Naive thymus-derived CD4-positive, alpha-beta T cell (primary cell): ENCODE measurements at regions of chr17 and their contacts with region 1.

Region 1: DNA sequence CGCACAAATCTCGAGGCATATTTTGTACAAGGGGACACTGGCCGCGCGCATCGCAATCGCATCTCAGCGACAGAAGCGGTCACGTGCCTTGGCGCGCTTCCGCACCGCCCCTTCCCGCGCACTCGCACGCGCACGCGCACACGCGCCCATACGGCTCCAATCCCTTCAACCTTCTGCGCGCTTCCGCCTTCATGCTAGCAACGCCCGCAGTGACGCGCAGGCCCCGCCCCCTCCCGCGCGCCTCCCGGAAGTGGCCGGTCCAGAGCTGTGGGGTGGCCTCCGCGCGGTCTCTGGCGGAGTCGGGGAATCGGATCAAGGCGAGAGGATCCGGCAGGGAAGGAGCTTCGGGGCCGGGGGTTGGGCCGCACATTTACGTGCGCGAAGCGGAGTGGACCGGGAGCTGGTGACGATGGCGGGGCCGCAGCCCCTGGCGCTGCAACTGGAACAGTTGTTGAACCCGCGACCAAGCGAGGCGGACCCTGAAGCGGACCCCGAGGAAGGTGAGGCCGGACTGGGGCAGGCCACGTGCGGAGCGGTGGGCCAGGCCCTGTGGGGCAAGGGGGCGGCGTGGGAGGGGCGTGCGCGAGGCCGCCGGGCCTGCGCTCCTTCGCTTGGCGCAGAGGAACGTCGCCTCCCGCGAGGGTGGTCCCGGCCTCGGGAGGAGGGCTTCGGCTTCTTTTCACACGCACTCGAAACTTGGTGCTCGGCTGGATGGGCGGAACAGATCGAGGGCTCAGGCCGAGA is at the start of gene AATF:
- DNase-seq: peak; percentile 93 to 99 (median 97)
- ATAC-seq: peak; percentile 99
- H3K4me3 ChIP-seq: peak within 1 kb of the TSS; percentile 69
- H3K4me3 Mint-ChIP-seq: peak within 1 kb of the TSS; percentile 91 to 99 (median 95)
- H3K27ac ChIP-seq: peak within 1 kb of the TSS; percentile 85
- H3K27ac Mint-ChIP-seq: peak within 1 kb of the TSS; percentile 91 to 97 (median 94)
- H3K4me1 ChIP-seq: peaks cover 21 to 33% of the 10 kb centered on the region in 2 donors
- H3K4me1 Mint-ChIP-seq: peaks cover 43 to 60% (median 51%) of the 10 kb centered on the region in 7 donors
- H3K27me3 ChIP-seq: peaks cover 7 to 18% of the 10 kb centered on the region in 2 donors
- H3K27me3 Mint-ChIP-seq: peaks cover 26 to 45% (median 34%) of the 10 kb centered on the region in 5 donors
- total RNA-seq, gene AATF: 39.7 to 70.8 (median 58.7) TPM

Region 2: GRCh38 chr17:36486204-36487194 is 462.4 kb before region 1 on chr17 and contains the start of gene ZNHIT3:
- CTCF ChIA-PET with region 1: no interaction called
- POLR2A ChIA-PET with region 1: interaction called, 3 read pairs
- intact Hi-C with region 1: loop called in 1 of 2 experiments (anchors 5 kb)
- DNase-seq: peak; percentile 74 to 94 (median 91)
- ATAC-seq: peak; percentile 98
- H3K4me3 ChIP-seq: peak within 1 kb of the TSS; percentile 82
- H3K4me3 Mint-ChIP-seq: peak within 1 kb of the TSS; percentile 87 to 100 (median 100)
- H3K27ac ChIP-seq: peak within 1 kb of the TSS; percentile 86
- H3K27ac Mint-ChIP-seq: peak within 1 kb of the TSS; percentile 94 to 100 (median 99)
- H3K4me1 ChIP-seq: peaks cover 29 to 41% of the 10 kb centered on the region in 2 donors
- H3K4me1 Mint-ChIP-seq: peaks cover 39 to 70% (median 49%) of the 10 kb centered on the region in 7 donors
- H3K27me3 ChIP-seq: no peaks in the 10 kb centered on the region
- H3K27me3 Mint-ChIP-seq: peaks cover 8 to 11% (median 10%) of the 10 kb centered on the region in 5 donors
- total RNA-seq, gene ZNHIT3: 38.4 to 59.9 (median 57.4) TPM

Region 3: DNA sequence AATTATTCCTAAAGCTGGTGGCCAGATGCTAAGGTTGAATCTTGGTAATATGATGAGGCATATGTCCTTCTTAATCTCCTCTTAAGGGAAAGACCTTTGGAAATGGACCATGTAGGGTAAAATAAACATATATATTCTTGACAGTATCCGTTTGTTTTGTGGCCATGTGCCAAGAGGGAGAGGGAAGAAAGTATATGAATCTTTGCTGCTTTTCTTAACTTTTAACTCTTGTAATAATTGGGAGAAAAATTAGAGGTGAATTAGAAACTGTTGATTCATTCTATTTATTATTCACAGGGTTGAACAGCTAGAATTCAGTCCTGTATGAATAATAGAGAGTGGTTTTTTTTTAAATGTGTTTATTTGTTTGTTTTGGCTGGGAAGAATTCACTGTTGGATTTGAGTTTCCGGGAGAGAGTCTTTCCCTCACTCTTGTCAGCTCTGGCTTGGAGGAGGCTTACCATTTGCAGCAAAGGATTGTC is 31.4 kb after region 1 on chr17:
- CTCF ChIA-PET with region 1: no interaction called
- POLR2A ChIA-PET with region 1: no interaction called
- intact Hi-C with region 1: no loop called
- DNase-seq: no peak
- ATAC-seq: no peak
- H3K4me3 ChIP-seq: no peak overlapping the region
- H3K4me3 Mint-ChIP-seq: no peak overlapping the region
- H3K27ac ChIP-seq: no peak overlapping the region
- H3K27ac Mint-ChIP-seq: peak overlapping the region in 1 of 9 donors; percentile 80
- H3K4me1 ChIP-seq: peaks cover 0 to 3% of the 10 kb centered on the region in 2 donors
- H3K4me1 Mint-ChIP-seq: peaks cover 9 to 61% (median 52%) of the 10 kb centered on the region in 7 donors
- H3K27me3 ChIP-seq: no peaks in the 10 kb centered on the region
- H3K27me3 Mint-ChIP-seq: no peaks in the 10 kb centered on the region

Region 4: DNA sequence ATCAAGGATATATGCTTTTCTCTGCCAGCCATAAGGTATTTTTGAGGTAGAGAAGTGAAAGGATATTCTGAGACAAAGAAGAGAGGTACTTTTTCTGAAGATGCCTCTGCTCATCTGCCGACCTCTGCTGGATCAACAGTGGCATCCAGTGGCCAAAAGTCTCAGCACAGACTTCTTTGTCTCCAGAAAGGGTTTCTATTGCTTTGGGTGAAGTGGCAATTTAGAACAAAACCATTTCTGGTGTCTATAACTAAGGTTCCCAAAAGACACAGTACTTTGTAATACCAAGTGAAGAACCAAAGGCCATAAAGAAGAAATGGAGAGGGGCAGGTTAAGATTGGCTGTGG is 271.7 kb after region 1 on chr17:
- CTCF ChIA-PET with region 1: no interaction called
- POLR2A ChIA-PET with region 1: no interaction called
- intact Hi-C with region 1: loop called in 1 of 2 experiments (anchors 2 kb)
- DNase-seq: peak in 3 of 9 donors; percentile 0 to 6 (median 4)
- ATAC-seq: no peak
- H3K4me3 ChIP-seq: no peak overlapping the region
- H3K4me3 Mint-ChIP-seq: no peak overlapping the region
- H3K27ac ChIP-seq: no peak overlapping the region
- H3K27ac Mint-ChIP-seq: no peak overlapping the region
- H3K4me1 ChIP-seq: no peaks in the 10 kb centered on the region
- H3K4me1 Mint-ChIP-seq: peaks cover 0 to 11% (median 0%) of the 10 kb centered on the region in 7 donors
- H3K27me3 ChIP-seq: no peaks in the 10 kb centered on the region
- H3K27me3 Mint-ChIP-seq: no peaks in the 10 kb centered on the region

Region 5: DNA sequence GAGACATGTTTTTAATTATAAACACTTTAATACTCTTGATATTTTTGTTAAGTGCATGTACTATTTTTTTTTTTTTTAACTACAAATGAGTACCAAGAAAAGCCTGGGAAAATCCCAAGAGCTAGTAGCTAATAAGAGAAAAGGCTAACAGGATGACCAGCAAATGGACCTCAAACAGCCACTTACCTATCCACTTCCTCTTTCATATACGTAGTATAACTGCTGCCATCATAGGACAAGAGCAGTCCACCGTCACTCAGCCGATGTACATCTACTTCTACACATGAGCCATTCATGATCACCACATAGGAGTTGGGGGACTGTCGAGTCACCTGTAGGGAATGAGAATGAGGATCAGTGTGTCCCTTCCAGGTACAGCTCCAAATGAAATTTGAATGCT is 298.9 kb after region 1 on chr17:
- CTCF ChIA-PET with region 1: no interaction called
- POLR2A ChIA-PET with region 1: no interaction called
- intact Hi-C with region 1: no loop called
- DNase-seq: no peak
- ATAC-seq: no peak
- H3K4me3 ChIP-seq: no peak overlapping the region
- H3K4me3 Mint-ChIP-seq: no peak overlapping the region
- H3K27ac ChIP-seq: no peak overlapping the region
- H3K27ac Mint-ChIP-seq: no peak overlapping the region
- H3K4me1 ChIP-seq: no peaks in the 10 kb centered on the region
- H3K4me1 Mint-ChIP-seq: no peaks in the 10 kb centered on the region
- H3K27me3 ChIP-seq: no peaks in the 10 kb centered on the region
- H3K27me3 Mint-ChIP-seq: no peaks in the 10 kb centered on the region